Activated CD4-positive, alpha-beta memory T cell treated with anti-CD3 and anti-CD28 coated beads for 36 hours (primary cell): ENCODE measurements at regions of chr4 and their contacts with region 1.

Region 1: DNA sequence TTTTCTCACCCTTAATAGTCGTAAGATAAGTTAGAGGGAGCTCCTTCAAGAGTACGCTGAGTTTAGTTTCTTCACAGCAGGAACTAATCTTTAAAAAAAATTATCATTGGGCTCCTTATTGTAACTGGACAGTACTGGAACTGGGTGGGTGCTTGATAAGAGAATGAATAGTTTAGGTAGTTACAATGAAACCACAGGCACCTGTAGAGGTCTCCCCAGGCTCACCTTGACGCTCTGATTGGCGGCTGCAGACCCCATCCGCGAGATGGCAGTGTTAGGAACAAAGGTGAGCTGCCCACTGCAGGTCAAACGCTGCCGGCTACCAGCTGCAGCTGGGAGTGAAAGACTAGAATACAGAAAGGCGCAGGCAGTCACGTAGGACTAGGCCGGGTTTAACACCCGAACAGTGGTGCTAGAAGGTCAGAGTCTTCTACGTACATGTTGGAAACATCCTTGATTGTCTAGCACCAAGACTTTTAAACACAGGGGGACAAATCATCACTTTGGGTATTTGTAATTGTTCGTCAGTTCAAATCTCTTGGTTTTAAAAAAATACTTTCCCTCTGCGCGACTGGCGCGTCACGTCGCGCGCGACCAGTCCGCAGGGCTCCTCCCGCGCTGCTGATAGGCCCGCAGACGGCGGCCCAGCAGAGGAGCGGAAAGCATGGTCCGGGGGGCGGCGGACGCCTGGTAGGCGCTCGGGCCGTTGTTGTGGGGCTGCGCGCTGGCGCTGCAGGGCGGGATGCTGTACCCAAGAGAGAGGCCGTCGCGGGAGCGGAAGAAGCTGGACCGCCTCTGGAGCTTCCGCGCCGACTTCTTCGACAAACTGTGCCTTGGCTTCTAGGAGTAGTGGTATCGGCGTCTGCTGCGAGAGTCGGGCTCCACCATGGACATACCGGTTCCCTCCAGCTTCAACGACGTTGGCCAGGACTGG is 45.6 kb downstream of the SMARCA5 start:
- DNase-seq: peak; percentile 79
- H3K4me3 Mint-ChIP-seq: peak overlapping the region; percentile 83
- H3K27ac Mint-ChIP-seq: peak overlapping the region; percentile 78
- H3K4me1 Mint-ChIP-seq: peaks cover 31% of the 10 kb centered on the region
- H3K27me3 Mint-ChIP-seq: no peaks in the 10 kb centered on the region

Region 2: GRCh38 chr4:143163618-143164017 is 395.5 kb before region 1 on chr4:
- CTCF ChIA-PET with region 1: no interaction called
- POLR2A ChIA-PET with region 1: no interaction called
- intact Hi-C with region 1: no loop called
- DNase-seq: no peak
- H3K4me3 Mint-ChIP-seq: no peak overlapping the region
- H3K27ac Mint-ChIP-seq: no peak overlapping the region
- H3K4me1 Mint-ChIP-seq: no peaks in the 10 kb centered on the region
- H3K27me3 Mint-ChIP-seq: no peaks in the 10 kb centered on the region

Region 3: DNA sequence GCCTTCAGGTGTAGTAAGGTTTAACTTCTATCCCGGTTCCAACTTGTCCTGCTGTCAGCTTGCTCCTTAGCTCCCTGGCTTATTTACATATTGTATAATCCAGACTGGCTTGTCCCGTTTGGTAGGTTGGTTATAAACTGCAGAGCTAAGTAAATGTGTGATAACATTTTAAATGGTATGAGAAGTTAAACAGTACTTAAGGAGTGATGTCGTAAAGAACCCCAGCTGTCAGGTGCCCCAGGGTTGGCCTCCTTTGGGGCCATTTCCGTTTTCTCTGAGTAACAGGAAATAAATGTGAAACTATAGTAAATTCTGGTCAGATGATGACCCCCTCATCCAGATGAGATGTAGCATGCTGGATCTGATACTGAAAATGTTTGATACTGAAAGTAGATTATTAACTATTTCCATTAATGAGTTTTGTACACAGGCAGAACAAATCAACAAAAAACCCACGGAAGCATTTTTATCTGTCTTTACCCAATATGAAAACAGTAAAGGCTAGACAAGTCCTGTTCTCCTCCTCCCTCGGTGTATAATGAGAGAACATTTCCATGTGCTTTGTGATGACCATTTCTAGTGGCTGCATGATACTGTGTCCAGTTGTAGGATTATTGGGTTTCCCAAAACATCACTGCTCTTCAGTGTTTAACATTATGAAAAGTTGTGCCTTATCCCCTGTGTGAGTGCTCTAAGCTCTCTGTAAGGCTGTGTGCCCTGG is 200.0 kb before region 1 on chr4:
- CTCF ChIA-PET with region 1: no interaction called
- POLR2A ChIA-PET with region 1: no interaction called
- intact Hi-C with region 1: loop called (anchors 5 kb)
- DNase-seq: peak; percentile 68
- H3K4me3 Mint-ChIP-seq: no peak overlapping the region
- H3K27ac Mint-ChIP-seq: peak overlapping the region; percentile 77
- H3K4me1 Mint-ChIP-seq: peaks cover 23% of the 10 kb centered on the region
- H3K27me3 Mint-ChIP-seq: no peaks in the 10 kb centered on the region

Region 4: GRCh38 chr4:143699331-143700045 is 140.4 kb after region 1 on chr4:
- CTCF ChIA-PET with region 1: no interaction called
- POLR2A ChIA-PET with region 1: interaction called, 3 read pairs
- intact Hi-C with region 1: loop called (anchors 5 kb)
- DNase-seq: no peak
- H3K4me3 Mint-ChIP-seq: no peak overlapping the region
- H3K27ac Mint-ChIP-seq: no peak overlapping the region
- H3K4me1 Mint-ChIP-seq: peaks cover 9% of the 10 kb centered on the region
- H3K27me3 Mint-ChIP-seq: peaks cover 43% of the 10 kb centered on the region

Region 5: GRCh38 chr4:144014808-144015207 is 455.7 kb after region 1 on chr4:
- CTCF ChIA-PET with region 1: no interaction called
- POLR2A ChIA-PET with region 1: no interaction called
- intact Hi-C with region 1: loop called (anchors 2 kb)
- DNase-seq: no peak
- H3K4me3 Mint-ChIP-seq: no peak overlapping the region
- H3K27ac Mint-ChIP-seq: no peak overlapping the region
- H3K4me1 Mint-ChIP-seq: no peaks in the 10 kb centered on the region
- H3K27me3 Mint-ChIP-seq: no peaks in the 10 kb centered on the region

Region 6: DNA sequence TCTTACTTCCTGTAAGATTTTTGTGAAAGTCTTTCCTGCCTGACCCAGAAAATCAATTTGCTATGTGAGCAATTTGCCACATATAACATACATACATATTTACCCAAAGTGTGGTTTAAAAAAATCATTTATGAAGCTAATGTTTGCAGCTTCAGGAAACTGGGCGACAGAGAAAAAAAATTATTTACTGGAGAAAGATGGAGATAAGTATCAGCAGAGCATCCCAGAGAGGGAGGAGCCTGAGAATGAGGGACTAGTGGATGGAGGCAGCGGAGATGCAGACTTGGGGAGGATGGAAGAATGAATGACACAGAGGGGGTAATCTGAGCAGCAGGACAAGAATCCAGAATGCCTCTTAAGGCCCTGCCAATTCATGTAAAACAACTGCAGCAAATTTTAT is 582.4 kb after region 1 on chr4:
- CTCF ChIA-PET with region 1: no interaction called
- POLR2A ChIA-PET with region 1: no interaction called
- intact Hi-C with region 1: loop called (anchors 2 kb)
- DNase-seq: no peak
- H3K4me3 Mint-ChIP-seq: no peak overlapping the region
- H3K27ac Mint-ChIP-seq: no peak overlapping the region
- H3K4me1 Mint-ChIP-seq: no peaks in the 10 kb centered on the region
- H3K27me3 Mint-ChIP-seq: peaks cover 5% of the 10 kb centered on the region